ENCODE measurements at regions of chr3 and their contacts with region 1.

Region 1: DNA sequence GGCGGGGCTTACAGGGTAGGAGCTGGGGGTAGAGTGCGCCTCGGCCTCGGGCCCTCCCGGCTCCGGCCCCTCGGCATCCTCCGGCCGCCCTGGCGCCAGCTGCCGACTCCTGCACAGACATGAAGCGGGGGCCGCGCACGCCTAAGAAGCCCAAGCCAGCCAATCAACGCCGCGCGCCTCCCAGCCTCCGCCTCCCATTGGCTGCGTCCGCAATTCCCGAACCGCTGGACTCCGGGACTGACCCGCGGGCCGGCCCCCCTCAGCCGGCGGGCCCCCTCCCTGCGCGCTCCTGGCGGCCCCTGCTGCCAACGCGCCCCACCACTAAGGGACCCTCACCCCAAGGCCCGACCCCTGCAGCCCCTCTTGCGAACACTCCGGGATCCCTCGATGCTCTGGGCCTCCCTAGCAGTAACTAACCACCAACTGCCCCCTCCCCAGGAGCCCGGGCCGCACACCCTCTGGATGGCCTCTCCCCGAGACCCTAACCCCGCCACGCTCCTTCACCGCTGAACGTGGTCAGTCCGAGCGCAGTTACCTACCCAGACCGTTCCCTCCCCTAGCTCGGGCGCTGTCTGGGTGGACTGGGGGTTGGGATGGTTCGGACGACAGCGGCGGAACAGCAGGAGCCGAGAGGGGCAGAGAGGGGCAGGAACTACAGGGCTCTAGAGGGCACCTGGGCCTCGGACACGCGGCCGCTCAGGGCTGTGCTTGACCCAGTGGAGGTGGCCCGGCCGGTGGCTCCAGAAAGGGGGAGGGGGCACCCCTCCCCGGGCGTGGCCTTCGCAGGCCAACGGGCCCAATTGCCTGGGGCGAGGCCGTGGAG is 5.0 kb downstream of the GATA2 start:
- DNase-seq: peak; percentile 90 to 94
- ATAC-seq: peak; percentile 74 to 87 (median 82)
- H3K4me3 ChIP-seq: peak overlapping the region; percentile 57 to 85 (median 70)
- H3K27ac ChIP-seq: peak overlapping the region; percentile 87 to 98 (median 93)
- H3K4me1 ChIP-seq: peaks cover 10 to 98% (median 60%) of the 10 kb centered on the region in 9 donors
- H3K27me3 ChIP-seq: peaks cover 13 to 100% (median 97%) of the 10 kb centered on the region in 7 donors
- CTCF ChIP-seq: no peak

Region 2: GRCh38 chr3:128307029-128307633 is 180.9 kb before region 1 on chr3:
- intact Hi-C with region 1: loop called in 3 of 10 experiments (anchors 5 to 10 kb)
- DNase-seq: no peak
- ATAC-seq: peak in 2 of 8 donors; percentile 4 to 34
- H3K4me3 ChIP-seq: no peak overlapping the region
- H3K27ac ChIP-seq: no peak overlapping the region
- H3K4me1 ChIP-seq: peaks cover 0 to 42% (median 20%) of the 10 kb centered on the region in 9 donors
- H3K27me3 ChIP-seq: no peaks in the 10 kb centered on the region
- CTCF ChIP-seq: peak in 3 of 9 donors; percentile 18 to 27 (median 24)

Region 3: DNA sequence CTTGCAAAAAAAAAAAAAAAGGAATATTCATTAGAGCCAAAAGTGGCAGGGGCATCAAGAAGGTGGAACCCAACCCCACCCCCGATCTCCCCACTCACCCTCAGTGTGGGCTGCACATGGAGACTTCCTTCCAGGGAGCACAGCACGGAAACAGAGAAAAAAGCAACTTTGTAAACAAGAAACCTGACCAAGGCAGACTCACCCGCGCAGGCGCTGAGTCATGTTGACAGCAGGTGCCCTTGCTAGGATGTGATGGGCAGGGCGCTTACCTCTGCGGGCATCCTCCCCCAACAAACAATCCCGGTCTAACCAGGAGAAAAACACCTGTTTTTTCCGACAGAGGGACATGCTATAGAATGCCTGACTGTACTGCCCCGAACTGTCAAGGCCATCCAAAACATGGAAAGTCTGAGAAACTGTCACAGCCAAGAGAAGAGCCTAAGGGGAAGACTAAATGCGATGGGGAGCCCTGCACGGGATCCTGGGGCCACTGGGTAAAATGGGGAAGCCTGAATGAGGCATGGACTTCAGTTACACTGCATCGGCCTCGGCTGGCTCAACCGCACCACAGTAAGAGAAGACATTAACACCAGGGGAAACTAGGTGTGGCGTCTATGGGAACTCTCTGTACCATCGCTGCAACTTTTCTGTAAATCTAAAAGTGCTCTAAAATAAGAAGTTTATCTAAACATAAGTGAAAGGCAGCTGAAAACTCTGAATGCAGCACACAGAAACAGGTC is 71.6 kb after region 1 on chr3:
- intact Hi-C with region 1: loop called in 1 of 10 experiments (anchors 5 kb)
- DNase-seq: no peak
- ATAC-seq: no peak
- H3K4me3 ChIP-seq: no peak overlapping the region
- H3K27ac ChIP-seq: no peak overlapping the region
- H3K4me1 ChIP-seq: peaks cover 4 to 30% (median 18%) of the 10 kb centered on the region in 9 donors
- H3K27me3 ChIP-seq: peaks cover 5 to 56% (median 30%) of the 10 kb centered on the region in 7 donors
- CTCF ChIP-seq: no peak

Region 4: GRCh38 chr3:128572644-128573105 is 84.7 kb after region 1 on chr3:
- intact Hi-C with region 1: loop called in 3 of 10 experiments (anchors 5 kb)
- DNase-seq: no peak
- ATAC-seq: no peak
- H3K4me3 ChIP-seq: no peak overlapping the region
- H3K27ac ChIP-seq: no peak overlapping the region
- H3K4me1 ChIP-seq: peaks cover 3 to 61% (median 39%) of the 10 kb centered on the region in 9 donors
- H3K27me3 ChIP-seq: peaks cover 0 to 38% (median 10%) of the 10 kb centered on the region in 7 donors
- CTCF ChIP-seq: peak in 6 of 9 donors; percentile 17 to 34 (median 24)

Measured in heart right ventricle (tissue), 16 donors.